ENCODE measurements at regions of chr17 and their contacts with region 1.

Region 1: GRCh38 chr17:70552230-70552981 is 383.1 kb downstream of the KCNJ2 start:
- DNase-seq: no peak
- H3K4me3 ChIP-seq: no peak overlapping the region
- H3K27ac ChIP-seq: no peak overlapping the region
- H3K4me1 ChIP-seq: no peaks in the 10 kb centered on the region
- H3K27me3 ChIP-seq: no peaks in the 10 kb centered on the region
- CTCF ChIP-seq: peak; percentile 48 to 54 (median 50)
- EP300 ChIP-seq: no peak
- POLR2A ChIP-seq: no peak

Region 2: GRCh38 chr17:69567130-69567529 is 985.3 kb before region 1 on chr17:
- intact Hi-C with region 1: loop called (anchors 5 kb)
- DNase-seq: no peak
- H3K4me3 ChIP-seq: no peak overlapping the region
- H3K27ac ChIP-seq: no peak overlapping the region
- H3K4me1 ChIP-seq: peaks cover 0 to 13% (median 5%) of the 10 kb centered on the region in 4 donors
- H3K27me3 ChIP-seq: no peaks in the 10 kb centered on the region
- CTCF ChIP-seq: no peak
- EP300 ChIP-seq: no peak
- POLR2A ChIP-seq: no peak

Region 3: GRCh38 chr17:70040336-70040735 is 512.1 kb before region 1 on chr17:
- intact Hi-C with region 1: no loop called
- DNase-seq: no peak
- H3K4me3 ChIP-seq: no peak overlapping the region
- H3K27ac ChIP-seq: no peak overlapping the region
- H3K4me1 ChIP-seq: no peaks in the 10 kb centered on the region
- H3K27me3 ChIP-seq: no peaks in the 10 kb centered on the region
- CTCF ChIP-seq: no peak
- EP300 ChIP-seq: no peak
- POLR2A ChIP-seq: no peak

Region 4: DNA sequence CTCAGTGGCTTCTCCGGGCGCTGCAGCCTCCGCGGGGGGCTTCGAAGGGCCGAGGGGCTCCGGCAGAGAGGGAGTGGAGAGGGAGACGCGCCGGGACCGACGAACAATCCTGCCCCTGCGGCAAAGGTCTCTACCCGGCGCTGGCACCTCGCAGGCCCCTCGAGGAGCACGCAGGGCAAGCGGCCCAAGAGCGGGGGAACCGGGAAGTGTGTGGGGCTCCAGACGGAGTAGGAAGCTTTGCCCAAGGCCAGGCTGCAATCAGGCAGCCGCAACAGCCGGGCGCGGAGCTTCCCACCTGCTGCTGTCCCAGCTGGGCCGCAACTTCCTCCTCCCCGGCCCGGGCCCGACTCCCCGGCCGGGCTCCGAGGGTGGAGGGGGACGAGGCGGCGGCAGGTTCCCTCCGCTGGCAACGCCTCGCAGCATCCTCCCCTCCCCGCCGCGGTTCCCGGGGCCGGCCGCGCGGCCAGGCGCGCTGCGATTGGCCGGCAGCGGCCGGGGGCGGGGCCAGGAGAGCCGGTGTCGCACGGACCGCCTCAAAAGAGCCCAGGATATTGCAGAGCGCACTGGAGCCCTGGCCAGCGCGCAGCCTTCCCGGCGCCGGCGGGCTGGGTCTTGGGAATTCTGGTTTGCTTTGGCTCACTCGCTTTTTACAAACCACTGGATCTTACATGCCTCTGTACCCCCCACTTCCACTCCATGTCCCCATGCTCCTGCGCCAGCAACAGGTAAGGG is 383.3 kb before region 1 on chr17 and contains the start of gene KCNJ2:
- intact Hi-C with region 1: loop called (anchors 10 kb)
- DNase-seq: peak; percentile 95
- H3K4me3 ChIP-seq: peak within 1 kb of the TSS; percentile 72 to 80 (median 75)
- H3K27ac ChIP-seq: peak within 1 kb of the TSS; percentile 88 to 94 (median 92)
- H3K4me1 ChIP-seq: peaks cover 0 to 38% (median 18%) of the 10 kb centered on the region in 4 donors
- H3K27me3 ChIP-seq: no peaks in the 10 kb centered on the region
- CTCF ChIP-seq: no peak
- EP300 ChIP-seq: no peak
- POLR2A ChIP-seq: peak; percentile 64
- total RNA-seq, gene KCNJ2: 2.9 to 11.2 (median 6.7) TPM

Region 5: DNA sequence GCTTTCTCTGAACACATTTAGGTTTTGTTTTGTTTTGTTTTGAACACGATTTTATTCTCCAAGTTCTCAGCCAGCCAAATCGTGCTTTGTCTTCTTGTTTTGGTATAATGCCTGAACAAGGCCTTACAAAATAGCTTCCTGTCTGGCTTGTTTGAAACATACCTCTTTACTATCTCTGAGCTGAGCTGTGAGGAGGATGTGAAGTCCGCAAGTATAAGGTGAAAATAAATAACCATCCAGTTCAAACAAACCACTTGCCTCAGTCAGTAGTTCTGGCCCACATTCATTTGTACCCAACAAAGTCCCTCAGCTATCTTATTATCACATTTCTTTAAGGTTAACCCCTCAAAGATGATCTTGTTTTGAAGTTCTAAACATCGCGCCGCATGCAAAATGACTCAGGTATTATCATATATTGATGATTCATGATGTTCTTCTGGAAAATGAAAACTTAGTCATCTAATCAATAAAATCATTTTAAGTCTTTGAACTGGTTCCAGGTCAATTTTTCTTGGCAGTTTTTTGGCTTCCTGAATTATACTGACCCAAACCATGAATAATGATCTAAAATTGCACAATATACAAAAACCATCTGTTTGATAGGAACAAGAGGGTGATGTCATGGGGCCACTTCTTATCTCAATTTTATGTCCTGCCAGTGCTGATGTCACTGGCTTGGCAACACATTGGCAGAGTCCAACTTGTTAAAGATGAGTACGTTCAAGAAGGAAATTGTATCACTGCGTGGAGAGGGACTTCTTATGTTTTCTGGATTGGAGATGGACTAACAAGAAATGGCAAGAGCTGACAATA is 311.2 kb after region 1 on chr17:
- intact Hi-C with region 1: no loop called
- DNase-seq: no peak
- H3K4me3 ChIP-seq: no peak overlapping the region
- H3K27ac ChIP-seq: no peak overlapping the region
- H3K4me1 ChIP-seq: no peaks in the 10 kb centered on the region
- H3K27me3 ChIP-seq: no peaks in the 10 kb centered on the region
- CTCF ChIP-seq: no peak
- EP300 ChIP-seq: no peak
- POLR2A ChIP-seq: no peak

Measured in esophagus muscularis mucosa (tissue), 4 donors.